ENCODE measurements at regions of chr6 and their contacts with region 1.

Region 1: DNA sequence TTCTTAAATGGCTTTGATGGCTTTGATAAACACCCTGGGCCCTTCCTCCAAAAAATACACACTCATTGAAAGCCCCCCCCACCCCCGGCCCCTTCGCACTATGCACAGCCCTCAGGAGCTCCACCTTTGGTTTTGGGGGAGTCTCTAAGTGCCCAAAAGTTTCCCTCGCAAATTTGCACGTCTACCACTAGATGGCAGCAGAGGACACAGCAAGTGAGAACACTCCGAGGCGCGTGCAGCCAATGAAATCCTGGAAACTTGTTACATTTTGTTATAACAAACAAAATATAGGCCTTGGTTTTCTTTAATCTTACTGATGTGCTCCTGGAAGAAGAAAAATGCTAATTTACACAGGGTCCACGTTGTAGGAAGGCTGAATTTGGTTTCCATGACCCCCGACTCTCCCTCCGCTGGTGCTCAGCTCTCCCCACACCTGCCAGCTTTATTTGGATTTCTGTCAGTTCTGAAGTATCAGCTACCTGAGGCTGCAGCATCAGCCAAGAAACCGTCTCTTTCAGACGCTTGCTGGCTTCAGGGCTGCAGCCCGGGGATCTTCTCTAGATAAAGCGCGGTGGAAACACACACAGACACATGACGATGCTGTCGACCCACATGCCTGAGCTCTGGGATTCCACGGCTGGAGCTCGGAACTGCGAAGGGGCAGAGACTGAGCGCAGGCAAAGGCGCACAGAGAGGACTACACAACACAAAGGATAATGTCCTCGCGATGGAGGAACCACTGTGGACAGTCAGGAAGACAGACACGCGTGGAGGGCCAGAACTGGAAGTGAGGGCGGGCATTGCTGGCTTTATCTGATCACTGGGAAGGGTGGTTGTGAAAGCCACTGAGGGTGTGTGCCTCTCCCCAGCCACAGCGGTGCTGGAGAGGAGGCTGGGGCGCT is 148.4 kb upstream of the RPS6KA2 start:
- DNase-seq: peak; percentile 16 to 85 (median 64)
- ATAC-seq: peak; percentile 77
- H3K4me3 ChIP-seq: no peak overlapping the region
- H3K4me3 Mint-ChIP-seq: no peak overlapping the region
- H3K27ac ChIP-seq: no peak overlapping the region
- H3K27ac Mint-ChIP-seq: no peak overlapping the region
- H3K4me1 ChIP-seq: peaks cover 5% of the 10 kb centered on the region
- H3K4me1 Mint-ChIP-seq: no peaks in the 10 kb centered on the region
- H3K27me3 ChIP-seq: peaks cover 0 to 3% of the 10 kb centered on the region in 2 experiments
- H3K27me3 Mint-ChIP-seq: peaks cover 17% of the 10 kb centered on the region
- CTCF ChIP-seq: peak; percentile 68

Region 2: DNA sequence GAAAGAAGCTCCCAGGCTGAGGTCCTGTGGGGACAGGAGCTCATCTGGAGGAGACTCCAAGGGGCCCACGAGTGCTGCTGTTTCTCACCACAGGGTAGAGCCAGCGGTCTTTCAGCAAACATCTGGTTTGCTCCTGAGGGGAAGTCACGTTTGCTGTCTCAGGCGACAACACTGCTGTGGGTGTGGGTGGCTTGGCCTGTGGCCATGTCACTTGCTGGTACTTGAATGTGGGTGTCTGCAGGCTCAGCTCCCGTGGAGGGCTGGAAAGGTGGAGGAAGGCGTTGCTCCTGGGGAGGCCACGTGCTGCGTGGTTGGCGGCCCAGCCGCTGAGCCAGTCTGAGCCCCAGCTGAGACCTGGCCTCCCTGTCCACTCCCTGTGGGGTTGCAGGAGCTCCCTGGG is 339.9 kb before region 1 on chr6:
- CTCF ChIA-PET with region 1: interaction called, 9 read pairs
- POLR2A ChIA-PET with region 1: no interaction called
- intact Hi-C with region 1: loop called (anchors 10 kb)
- DNase-seq: peak; percentile 26 to 84 (median 60)
- ATAC-seq: peak; percentile 88
- H3K4me3 ChIP-seq: no peak overlapping the region
- H3K4me3 Mint-ChIP-seq: peak overlapping the region; percentile 29
- H3K27ac ChIP-seq: no peak overlapping the region
- H3K27ac Mint-ChIP-seq: peak overlapping the region; percentile 88
- H3K4me1 ChIP-seq: peaks cover 22% of the 10 kb centered on the region
- H3K4me1 Mint-ChIP-seq: peaks cover 29% of the 10 kb centered on the region
- H3K27me3 ChIP-seq: no peaks in the 10 kb centered on the region
- H3K27me3 Mint-ChIP-seq: no peaks in the 10 kb centered on the region
- CTCF ChIP-seq: peak; percentile 35

Region 3: DNA sequence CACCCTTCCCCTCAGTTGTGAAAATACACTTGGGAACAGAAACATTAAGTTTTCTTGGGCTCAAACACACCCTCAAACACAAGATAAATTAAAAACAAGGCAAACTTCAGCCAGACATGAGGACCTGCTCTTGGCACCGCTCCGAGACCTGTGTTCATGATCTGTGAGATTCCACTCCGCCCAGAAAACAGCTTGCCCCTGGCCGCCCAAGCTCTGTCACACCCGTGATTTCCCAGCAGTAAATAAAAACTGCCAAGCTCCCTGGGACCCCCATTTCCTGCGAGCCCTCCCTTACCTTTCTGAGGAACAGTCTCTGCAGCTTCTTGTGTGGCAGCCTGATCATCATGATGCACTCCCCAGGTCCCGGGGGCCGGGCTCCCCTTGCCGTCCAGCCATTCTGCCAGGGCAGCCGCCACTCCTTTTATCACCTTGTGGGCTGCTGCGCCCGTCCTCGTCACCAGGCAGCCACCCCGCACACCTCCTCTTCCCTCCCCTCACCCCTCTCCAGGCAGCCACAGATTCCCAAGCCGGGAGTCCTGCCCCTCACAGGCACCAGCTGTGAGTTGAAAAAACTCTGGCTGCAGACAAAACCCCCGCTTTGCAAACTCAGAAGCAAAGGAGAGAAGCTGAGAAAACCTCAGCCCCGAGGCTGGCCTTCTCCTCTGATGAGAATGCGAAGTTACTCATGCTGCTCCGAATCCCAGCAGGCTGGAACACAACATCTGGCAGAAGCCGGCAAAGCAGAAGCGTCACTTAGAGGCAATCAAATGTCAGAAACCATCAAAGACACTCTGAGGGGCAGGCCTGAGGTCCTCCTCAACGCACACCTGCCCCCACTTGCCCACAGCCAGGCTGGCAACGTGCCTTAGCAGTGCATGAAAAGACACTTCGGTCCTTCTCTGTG is 17.9 kb before region 1 on chr6:
- CTCF ChIA-PET with region 1: interaction called, 71 read pairs
- POLR2A ChIA-PET with region 1: no interaction called
- intact Hi-C with region 1: no loop called
- DNase-seq: peak in 3 of 9 experiments; percentile 9 to 21 (median 20)
- ATAC-seq: peak; percentile 38
- H3K4me3 ChIP-seq: no peak overlapping the region
- H3K4me3 Mint-ChIP-seq: peak overlapping the region; percentile 36
- H3K27ac ChIP-seq: no peak overlapping the region
- H3K27ac Mint-ChIP-seq: no peak overlapping the region
- H3K4me1 ChIP-seq: peaks cover 20% of the 10 kb centered on the region
- H3K4me1 Mint-ChIP-seq: peaks cover 25% of the 10 kb centered on the region
- H3K27me3 ChIP-seq: no peaks in the 10 kb centered on the region
- H3K27me3 Mint-ChIP-seq: peaks cover 16% of the 10 kb centered on the region
- CTCF ChIP-seq: no peak

Region 4: GRCh38 chr6:166810864-166811263 is 35.4 kb after region 1 on chr6:
- CTCF ChIA-PET with region 1: no interaction called
- POLR2A ChIA-PET with region 1: no interaction called
- intact Hi-C with region 1: no loop called
- DNase-seq: no peak
- ATAC-seq: no peak
- H3K4me3 ChIP-seq: no peak overlapping the region
- H3K4me3 Mint-ChIP-seq: no peak overlapping the region
- H3K27ac ChIP-seq: no peak overlapping the region
- H3K27ac Mint-ChIP-seq: no peak overlapping the region
- H3K4me1 ChIP-seq: no peaks in the 10 kb centered on the region
- H3K4me1 Mint-ChIP-seq: no peaks in the 10 kb centered on the region
- H3K27me3 ChIP-seq: no peaks in the 10 kb centered on the region
- H3K27me3 Mint-ChIP-seq: no peaks in the 10 kb centered on the region
- CTCF ChIP-seq: no peak

Region 5: GRCh38 chr6:166950443-166950821 is 175.0 kb after region 1 on chr6:
- CTCF ChIA-PET with region 1: interaction called, 10 read pairs
- POLR2A ChIA-PET with region 1: no interaction called
- intact Hi-C with region 1: no loop called
- DNase-seq: peak in 1 of 9 experiments; percentile 23
- ATAC-seq: no peak
- H3K4me3 ChIP-seq: no peak overlapping the region
- H3K4me3 Mint-ChIP-seq: peak overlapping the region; percentile 77
- H3K27ac ChIP-seq: peak overlapping the region; percentile 10 to 74
- H3K27ac Mint-ChIP-seq: peak overlapping the region; percentile 88
- H3K4me1 ChIP-seq: peaks cover 55% of the 10 kb centered on the region
- H3K4me1 Mint-ChIP-seq: peaks cover 53% of the 10 kb centered on the region
- H3K27me3 ChIP-seq: no peaks in the 10 kb centered on the region
- H3K27me3 Mint-ChIP-seq: no peaks in the 10 kb centered on the region
- CTCF ChIP-seq: no peak

Region 6: DNA sequence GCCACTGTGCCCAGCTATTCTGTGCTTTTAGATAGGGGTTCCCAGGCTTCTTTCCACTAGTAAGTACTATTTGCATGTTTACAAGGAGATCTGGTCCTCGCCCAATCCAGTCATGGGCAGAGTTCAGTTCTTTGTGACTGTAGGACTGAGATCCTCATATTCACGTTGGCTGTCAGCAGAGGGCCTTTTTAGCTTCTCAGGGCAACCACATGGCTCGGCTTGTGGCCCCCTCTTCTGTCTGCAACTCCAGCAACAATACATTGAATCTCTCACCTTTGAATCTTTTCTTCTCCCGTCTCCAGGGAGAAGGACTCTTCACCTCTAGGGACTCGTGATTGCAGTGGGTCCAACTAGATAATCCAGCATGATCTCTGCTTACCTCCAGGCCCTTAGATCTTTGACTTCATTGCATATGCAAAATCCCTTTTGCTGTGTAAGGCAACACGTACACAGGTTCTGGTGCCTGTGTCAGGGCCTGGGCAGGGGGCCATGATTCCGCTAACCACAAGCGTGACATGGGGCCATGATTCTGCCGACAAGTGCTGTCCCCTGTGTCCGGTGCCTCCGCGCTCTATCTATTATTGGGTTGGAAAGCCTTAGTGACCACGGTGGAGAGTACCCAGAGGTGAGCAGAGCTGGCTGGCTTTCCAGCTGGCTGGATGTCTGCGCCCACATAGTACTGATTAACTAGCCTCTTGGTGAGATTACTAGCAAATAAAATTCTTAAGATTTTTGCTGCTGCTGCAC is 352.5 kb after region 1 on chr6:
- CTCF ChIA-PET with region 1: interaction called, 11 read pairs
- POLR2A ChIA-PET with region 1: no interaction called
- intact Hi-C with region 1: no loop called
- DNase-seq: no peak
- ATAC-seq: no peak
- H3K4me3 ChIP-seq: no peak overlapping the region
- H3K4me3 Mint-ChIP-seq: no peak overlapping the region
- H3K27ac ChIP-seq: no peak overlapping the region
- H3K27ac Mint-ChIP-seq: no peak overlapping the region
- H3K4me1 ChIP-seq: peaks cover 6% of the 10 kb centered on the region
- H3K4me1 Mint-ChIP-seq: peaks cover 36% of the 10 kb centered on the region
- H3K27me3 ChIP-seq: no peaks in the 10 kb centered on the region
- H3K27me3 Mint-ChIP-seq: no peaks in the 10 kb centered on the region
- CTCF ChIP-seq: no peak

Region 7: DNA sequence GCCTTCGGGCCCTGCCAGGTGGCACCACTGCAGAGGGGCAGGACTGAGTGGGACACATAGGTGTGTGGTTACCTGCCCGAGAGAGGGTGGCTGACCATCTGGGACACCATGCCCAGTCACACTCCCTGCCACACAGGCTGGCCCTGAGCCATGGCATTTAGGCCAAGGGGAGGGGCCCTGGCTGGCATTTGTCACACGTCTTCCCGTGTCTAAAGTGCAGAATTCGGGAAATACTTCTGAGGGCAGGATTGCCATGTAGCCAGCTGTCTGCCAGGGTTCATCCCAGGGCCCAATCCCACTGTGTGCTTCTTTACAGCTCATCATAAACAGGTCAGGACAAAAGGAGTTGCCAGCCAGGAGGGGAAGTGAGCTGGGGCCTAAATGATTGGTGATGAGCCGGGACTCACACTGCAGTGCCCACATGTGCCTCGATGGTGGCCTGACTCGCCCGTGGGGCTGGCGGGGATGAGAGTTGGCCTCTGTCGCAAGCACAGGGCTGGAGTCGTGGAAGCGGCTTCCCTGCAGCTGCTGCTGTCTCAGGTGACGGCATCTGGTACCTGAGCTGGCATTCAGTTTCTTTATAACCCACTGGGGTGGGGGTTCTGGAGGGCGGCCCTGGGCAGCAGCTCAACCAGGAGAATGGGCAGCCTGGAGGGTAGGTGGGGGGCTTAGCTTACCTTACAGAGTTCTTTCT is 509.8 kb after region 1 on chr6:
- CTCF ChIA-PET with region 1: interaction called, 14 read pairs
- POLR2A ChIA-PET with region 1: no interaction called
- intact Hi-C with region 1: loop called in 1 of 2 experiments (anchors 1 kb)
- DNase-seq: no peak
- ATAC-seq: no peak
- H3K4me3 ChIP-seq: no peak overlapping the region
- H3K4me3 Mint-ChIP-seq: no peak overlapping the region
- H3K27ac ChIP-seq: no peak overlapping the region
- H3K27ac Mint-ChIP-seq: no peak overlapping the region
- H3K4me1 ChIP-seq: no peaks in the 10 kb centered on the region
- H3K4me1 Mint-ChIP-seq: no peaks in the 10 kb centered on the region
- H3K27me3 ChIP-seq: no peaks in the 10 kb centered on the region
- H3K27me3 Mint-ChIP-seq: no peaks in the 10 kb centered on the region
- CTCF ChIP-seq: no peak